ENCODE measurements at regions of chr12 and their contacts with region 1.

Region 1: DNA sequence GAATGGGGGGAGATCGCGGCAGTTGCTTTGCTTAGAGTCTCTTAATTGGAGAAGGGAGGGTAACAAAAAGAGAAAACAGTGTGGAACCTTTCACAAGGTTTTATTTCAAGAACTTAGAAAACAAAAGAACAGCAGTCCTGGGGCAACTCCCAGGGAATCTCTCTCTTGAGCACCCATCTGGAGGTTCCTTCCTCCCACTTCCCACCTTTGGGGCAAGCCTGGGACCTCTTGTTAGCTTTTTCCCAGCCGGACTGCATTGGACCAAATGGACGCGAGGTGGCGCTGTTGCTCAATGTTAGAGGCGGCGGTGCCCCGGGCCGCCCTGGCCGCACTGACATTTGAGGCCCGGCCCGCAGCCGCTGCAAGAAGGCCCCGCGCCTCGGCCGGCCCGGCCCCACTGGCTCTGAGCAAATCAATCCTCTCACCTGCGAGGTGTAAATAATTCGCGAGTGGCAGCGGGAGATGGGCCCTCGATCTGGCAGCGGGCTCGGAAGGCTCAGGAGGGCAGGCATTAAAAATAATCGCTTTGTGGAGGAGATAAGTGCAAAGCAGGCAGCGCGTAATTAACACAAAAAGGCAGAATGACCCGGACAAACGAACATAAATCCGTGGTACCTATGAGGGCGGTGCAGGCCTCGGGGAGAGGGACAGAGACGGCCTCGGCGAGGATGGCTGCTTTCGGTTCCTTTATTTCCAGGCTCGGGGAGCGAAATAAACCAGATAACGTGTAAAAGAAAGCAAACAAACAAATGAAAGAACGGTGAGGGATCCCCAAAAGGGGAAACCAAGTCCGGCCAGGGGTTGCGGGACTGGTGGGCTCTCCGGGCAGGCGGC is 2.7 kb upstream of the HOXC8 start:
- DNase-seq: peak; percentile 91
- ATAC-seq: peak; percentile 68
- H3K4me3 ChIP-seq: peak overlapping the region; percentile 47; the same call in 1 of the 2 replicates
- H3K27ac ChIP-seq: no peak overlapping the region
- H3K4me1 ChIP-seq: peaks cover 26% of the 10 kb centered on the region
- H3K27me3 ChIP-seq: no peaks in the 10 kb centered on the region
- CTCF ChIP-seq: peak; percentile 95

Region 2: GRCh38 chr12:53159195-53159839 is 846.8 kb before region 1 on chr12:
- CTCF ChIA-PET with region 1: no interaction called
- POLR2A ChIA-PET with region 1: no interaction called
- intact Hi-C with region 1: no loop called
- DNase-seq: peak; percentile 86
- ATAC-seq: peak; percentile 96
- H3K4me3 ChIP-seq: no peak overlapping the region
- H3K27ac ChIP-seq: no peak overlapping the region
- H3K4me1 ChIP-seq: no peaks in the 10 kb centered on the region
- H3K27me3 ChIP-seq: no peaks in the 10 kb centered on the region
- CTCF ChIP-seq: peak; percentile 97

Region 3: DNA sequence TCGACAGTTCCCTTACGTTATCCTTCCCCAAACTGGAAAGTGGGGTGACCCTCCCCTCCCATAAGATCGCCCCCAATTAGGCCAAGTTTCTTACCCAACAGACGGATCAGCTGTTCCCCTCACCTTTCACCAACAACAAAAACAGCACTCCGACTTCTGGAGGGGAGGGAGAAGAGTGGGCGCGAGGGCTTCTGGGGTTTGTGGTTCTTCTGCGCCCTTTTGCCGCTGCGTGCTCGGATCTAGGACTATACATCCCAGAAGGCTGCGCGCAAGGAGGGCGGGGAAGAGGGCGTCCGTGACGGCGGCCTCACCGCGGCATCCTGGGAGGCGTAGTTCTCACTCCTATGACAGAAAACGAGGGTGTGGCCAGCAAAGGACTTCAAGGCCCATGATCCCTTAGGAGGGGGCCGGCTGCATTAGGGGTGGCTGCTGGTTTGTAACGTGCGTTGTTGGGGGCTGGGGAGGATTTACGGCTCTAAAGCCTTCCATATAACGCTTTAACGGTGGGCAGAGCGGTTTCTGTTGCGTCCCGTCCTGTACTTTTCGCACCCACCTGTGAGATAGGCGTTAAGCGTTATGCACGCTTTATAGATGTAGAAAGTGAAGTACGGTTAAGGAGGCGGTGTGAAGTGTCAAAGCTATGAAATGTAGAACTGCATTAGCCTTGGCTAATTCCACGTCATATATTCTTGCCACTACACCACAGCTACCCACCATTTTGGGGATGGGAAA is 278.6 kb before region 1 on chr12 and contains the start of gene CALCOCO1:
- CTCF ChIA-PET with region 1: interaction called, 15 read pairs
- POLR2A ChIA-PET with region 1: no interaction called
- intact Hi-C with region 1: no loop called
- DNase-seq: peak; percentile 98
- ATAC-seq: peak; percentile 100
- H3K4me3 ChIP-seq: peak within 1 kb of the TSS; percentile 77
- H3K27ac ChIP-seq: no peak within 1 kb of the TSS
- H3K4me1 ChIP-seq: peaks cover 16% of the 10 kb centered on the region
- H3K27me3 ChIP-seq: no peaks in the 10 kb centered on the region
- CTCF ChIP-seq: no peak
- total RNA-seq, gene CALCOCO1: 20.4 and 30.6 TPM in 2 replicates

Region 4: GRCh38 chr12:53978477-53979356 is 27.4 kb before region 1 on chr12:
- CTCF ChIA-PET with region 1: interaction called, 11 read pairs
- POLR2A ChIA-PET with region 1: no interaction called
- intact Hi-C with region 1: no loop called
- DNase-seq: peak; percentile 78
- ATAC-seq: peak; percentile 80
- H3K4me3 ChIP-seq: peak overlapping the region; percentile 19; the same call in 1 of the 2 replicates
- H3K27ac ChIP-seq: no peak overlapping the region
- H3K4me1 ChIP-seq: peaks cover 22% of the 10 kb centered on the region
- H3K27me3 ChIP-seq: no peaks in the 10 kb centered on the region
- CTCF ChIP-seq: no peak

Region 5: GRCh38 chr12:54017878-54018467 is 11.9 kb after region 1 on chr12:
- CTCF ChIA-PET with region 1: interaction called, 12 read pairs
- POLR2A ChIA-PET with region 1: no interaction called
- intact Hi-C with region 1: no loop called
- DNase-seq: peak; percentile 86
- ATAC-seq: peak; percentile 73
- H3K4me3 ChIP-seq: peak overlapping the region; percentile 96
- H3K27ac ChIP-seq: peak overlapping the region; percentile 38
- H3K4me1 ChIP-seq: peaks cover 21% of the 10 kb centered on the region
- H3K27me3 ChIP-seq: no peaks in the 10 kb centered on the region
- CTCF ChIP-seq: no peak

Region 6: DNA sequence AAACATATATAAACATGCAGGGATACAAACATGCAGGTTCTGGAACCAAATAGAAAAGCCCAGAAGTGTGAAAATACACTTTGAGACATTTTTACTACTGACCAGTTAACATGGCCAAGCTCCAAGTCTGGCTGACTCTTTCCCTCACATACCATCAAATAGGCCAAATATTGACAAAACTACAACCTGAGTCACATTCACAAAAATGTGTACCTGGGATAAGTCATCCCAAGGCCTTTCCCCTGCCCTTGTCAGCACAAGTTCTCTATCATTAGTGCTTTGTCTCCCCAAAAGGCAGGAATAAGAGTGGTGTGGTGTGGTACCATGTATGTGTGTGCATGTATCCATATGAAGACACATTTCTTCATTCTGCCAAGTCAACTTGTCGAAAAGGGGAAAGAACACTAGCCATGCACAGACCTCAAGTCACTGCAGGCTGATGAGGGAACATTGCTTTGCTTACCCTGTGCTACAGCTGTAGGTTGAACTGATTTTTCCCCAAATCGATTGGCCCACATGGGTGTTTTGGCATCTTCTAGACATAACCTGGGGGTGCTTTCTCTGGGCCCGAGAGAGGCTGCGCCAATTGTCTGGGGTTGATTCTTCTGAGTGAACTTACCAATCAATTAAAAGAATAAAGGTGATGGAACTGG is 62.5 kb after region 1 on chr12:
- CTCF ChIA-PET with region 1: no interaction called
- POLR2A ChIA-PET with region 1: interaction called, 14 read pairs
- intact Hi-C with region 1: no loop called
- DNase-seq: peak; percentile 89
- ATAC-seq: peak; percentile 98
- H3K4me3 ChIP-seq: no peak overlapping the region
- H3K27ac ChIP-seq: no peak overlapping the region
- H3K4me1 ChIP-seq: peaks cover 15% of the 10 kb centered on the region
- H3K27me3 ChIP-seq: no peaks in the 10 kb centered on the region
- CTCF ChIP-seq: no peak

Region 7: GRCh38 chr12:54201001-54201794 is 195.1 kb after region 1 on chr12:
- CTCF ChIA-PET with region 1: interaction called, 21 read pairs
- POLR2A ChIA-PET with region 1: no interaction called
- intact Hi-C with region 1: loop called (anchors 1 kb)
- DNase-seq: peak; percentile 77
- ATAC-seq: peak; percentile 89
- H3K4me3 ChIP-seq: no peak overlapping the region
- H3K27ac ChIP-seq: no peak overlapping the region
- H3K4me1 ChIP-seq: peaks cover 8% of the 10 kb centered on the region
- H3K27me3 ChIP-seq: no peaks in the 10 kb centered on the region
- CTCF ChIP-seq: peak; percentile 90